ENCODE measurements at regions of chrX and their contacts with region 1.

Region 1: GRCh38 chrX:8075636-8076035 is 95.4 kb downstream of the VCX2 start:
- DNase-seq: no peak
- ATAC-seq: no peak
- H3K4me3 ChIP-seq: no peak overlapping the region
- H3K27ac ChIP-seq: no peak overlapping the region
- H3K4me1 ChIP-seq: no peaks in the 10 kb centered on the region
- H3K27me3 ChIP-seq: no peaks in the 10 kb centered on the region
- CTCF ChIP-seq: no peak

Region 2: DNA sequence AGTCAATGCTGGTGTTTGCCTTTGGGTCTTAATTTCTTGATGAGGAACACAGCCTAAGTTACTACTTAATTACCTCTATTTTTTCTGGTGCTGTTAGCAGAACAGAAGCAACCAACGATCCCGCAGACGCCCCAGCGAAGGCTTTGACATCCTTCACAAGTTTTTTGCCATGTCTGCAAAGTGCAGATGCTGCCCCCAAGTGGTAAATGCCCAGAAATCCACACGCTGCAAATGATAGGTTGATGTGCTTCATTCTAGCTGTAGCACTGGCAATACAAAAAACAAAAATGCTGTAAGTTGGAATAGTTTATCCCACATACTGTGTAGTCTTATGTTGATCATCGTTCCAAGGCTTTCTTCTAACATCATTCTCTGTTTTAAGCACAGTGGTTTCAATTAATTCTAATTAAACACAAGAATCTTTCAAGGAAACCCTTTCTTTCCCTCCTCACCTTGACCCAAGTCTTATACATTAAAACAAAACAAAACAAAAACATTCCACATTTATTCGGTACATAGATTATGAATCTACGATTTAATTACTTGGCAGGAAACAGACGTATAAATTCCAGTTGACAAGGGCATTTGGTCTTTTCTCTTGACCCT is 149.7 kb before region 1 on chrX:
- intact Hi-C with region 1: no loop called
- DNase-seq: peak; percentile 22 to 56
- ATAC-seq: peak; percentile 39 to 72 (median 52)
- H3K4me3 ChIP-seq: no peak overlapping the region
- H3K27ac ChIP-seq: no peak overlapping the region
- H3K4me1 ChIP-seq: no peaks in the 10 kb centered on the region
- H3K27me3 ChIP-seq: no peaks in the 10 kb centered on the region
- CTCF ChIP-seq: peak; percentile 67

Region 3: GRCh38 chrX:8042304-8042703 is 33.3 kb before region 1 on chrX:
- intact Hi-C with region 1: loop called in 1 of 2 experiments (anchors 1 kb)
- DNase-seq: no peak
- ATAC-seq: no peak
- H3K4me3 ChIP-seq: no peak overlapping the region
- H3K27ac ChIP-seq: no peak overlapping the region
- H3K4me1 ChIP-seq: no peaks in the 10 kb centered on the region
- H3K27me3 ChIP-seq: peaks cover 0 to 3% (median 0%) of the 10 kb centered on the region in 3 donors
- CTCF ChIP-seq: no peak